HEK293T (cell line): ENCODE measurements at regions of chr12 and their contacts with region 1.

Region 1: DNA sequence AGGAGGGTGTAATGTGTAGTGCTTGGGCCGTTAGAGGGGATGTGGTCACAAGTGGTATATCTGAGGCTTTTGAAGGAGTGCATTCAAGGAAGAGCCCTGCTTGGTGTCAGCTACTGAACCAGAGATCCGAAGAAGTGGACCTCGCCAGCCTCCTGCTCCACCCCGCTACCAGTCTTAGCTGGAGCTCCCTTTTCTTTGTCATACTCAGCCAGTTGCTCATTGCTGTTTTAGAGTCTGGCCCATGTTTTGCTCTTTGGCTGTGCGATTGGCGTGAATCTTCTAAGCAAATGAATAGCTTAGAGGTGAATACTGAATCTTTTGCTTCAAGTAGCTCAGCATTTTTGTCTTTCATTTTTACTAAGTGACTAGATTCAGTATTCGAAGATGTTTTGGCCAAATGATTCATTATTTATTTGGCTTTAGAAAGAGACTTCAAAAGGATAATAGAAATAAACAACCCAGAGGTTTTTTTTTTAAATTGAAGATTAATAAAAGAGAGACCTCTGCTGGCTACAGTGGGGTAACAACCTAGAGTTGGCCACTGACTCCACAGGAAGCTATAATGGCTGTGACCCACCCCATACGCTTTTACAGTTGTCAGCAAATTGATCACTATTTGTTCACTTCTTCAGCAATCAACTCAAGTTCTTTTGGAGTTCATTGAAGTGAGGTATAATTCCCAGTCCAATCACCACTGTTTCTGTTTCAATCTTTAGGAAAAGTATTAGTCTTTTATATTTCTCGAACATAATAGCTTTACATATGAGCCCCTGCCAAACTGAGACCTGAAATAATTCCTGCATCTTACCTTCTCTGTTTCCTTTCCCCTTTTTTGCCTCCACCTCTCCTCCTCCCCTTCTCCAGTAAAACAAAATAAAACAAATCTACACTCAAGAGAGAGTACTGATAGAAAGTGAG is 19.9 kb downstream of the CDKN1B start:
- DNase-seq: no peak

Region 2: DNA sequence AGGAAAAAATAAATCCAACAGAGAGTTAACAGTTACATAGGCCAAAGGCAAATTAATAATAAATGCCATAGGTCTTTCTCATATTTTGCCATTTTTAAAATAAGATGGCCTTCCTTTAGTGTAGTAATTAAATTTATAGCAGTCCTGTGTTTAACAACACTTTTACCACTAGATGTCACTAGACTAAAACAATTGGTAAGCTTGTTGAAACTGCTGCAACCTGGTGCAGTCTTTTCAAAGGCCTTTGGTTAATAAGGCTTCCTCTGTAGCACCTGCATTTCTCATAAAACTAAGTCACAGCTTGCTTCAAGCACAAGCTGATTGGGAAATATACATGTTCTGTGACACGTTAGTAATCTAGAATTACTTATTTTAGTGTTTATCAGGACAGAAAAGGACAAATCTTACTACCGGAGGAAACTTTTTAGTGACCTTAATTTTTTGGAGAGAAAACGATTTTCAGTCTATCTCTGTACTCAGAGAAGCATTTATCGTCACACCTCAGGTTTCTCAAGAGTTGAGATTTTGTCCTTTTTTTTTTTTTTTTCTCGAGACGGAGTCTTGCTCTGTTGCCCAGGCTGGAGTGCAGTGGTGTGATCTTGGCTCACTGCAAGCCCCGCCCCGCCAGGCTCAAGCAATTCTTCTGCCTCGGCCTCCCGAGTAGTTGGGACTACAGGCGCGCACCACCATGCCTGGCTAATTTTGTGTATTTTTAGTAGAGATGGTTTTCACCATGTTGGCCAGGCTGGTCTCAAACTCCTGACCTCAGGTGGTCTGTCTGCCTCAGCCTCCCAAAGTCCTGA is 360.2 kb before region 1 on chr12:
- CTCF ChIA-PET with region 1: interaction called, 13 read pairs
- POLR2A ChIA-PET with region 1: no interaction called
- DNase-seq: peak; percentile 68

Region 3: DNA sequence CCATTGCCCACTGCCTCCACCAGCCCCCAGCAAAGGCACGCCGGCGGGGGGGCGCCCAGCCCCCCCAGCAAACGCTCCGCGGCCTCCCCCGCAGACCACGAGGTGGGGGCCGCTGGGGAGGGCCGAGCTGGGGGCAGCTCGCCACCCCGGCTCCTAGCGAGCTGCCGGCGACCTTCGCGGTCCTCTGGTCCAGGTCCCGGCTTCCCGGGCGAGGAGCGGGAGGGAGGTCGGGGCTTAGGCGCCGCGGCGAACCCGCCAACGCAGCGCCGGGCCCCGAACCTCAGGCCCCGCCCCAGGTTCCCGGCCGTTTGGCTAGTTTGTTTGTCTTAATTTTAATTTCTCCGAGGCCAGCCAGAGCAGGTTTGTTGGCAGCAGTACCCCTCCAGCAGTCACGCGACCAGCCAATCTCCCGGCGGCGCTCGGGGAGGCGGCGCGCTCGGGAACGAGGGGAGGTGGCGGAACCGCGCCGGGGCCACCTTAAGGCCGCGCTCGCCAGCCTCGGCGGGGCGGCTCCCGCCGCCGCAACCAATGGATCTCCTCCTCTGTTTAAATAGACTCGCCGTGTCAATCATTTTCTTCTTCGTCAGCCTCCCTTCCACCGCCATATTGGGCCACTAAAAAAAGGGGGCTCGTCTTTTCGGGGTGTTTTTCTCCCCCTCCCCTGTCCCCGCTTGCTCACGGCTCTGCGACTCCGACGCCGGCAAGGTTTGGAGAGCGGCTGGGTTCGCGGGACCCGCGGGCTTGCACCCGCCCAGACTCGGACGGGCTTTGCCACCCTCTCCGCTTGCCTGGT is 20.0 kb before region 1 on chr12 and contains the start of gene CDKN1B:
- CTCF ChIA-PET with region 1: interaction called, 21 read pairs
- POLR2A ChIA-PET with region 1: interaction called, 81 read pairs
- DNase-seq: peak; percentile 81

Region 4: GRCh38 chr12:12724661-12725545 is 12.1 kb before region 1 on chr12:
- CTCF ChIA-PET with region 1: interaction called, 37 read pairs
- POLR2A ChIA-PET with region 1: interaction called, 81 read pairs
- DNase-seq: no peak

Region 5: DNA sequence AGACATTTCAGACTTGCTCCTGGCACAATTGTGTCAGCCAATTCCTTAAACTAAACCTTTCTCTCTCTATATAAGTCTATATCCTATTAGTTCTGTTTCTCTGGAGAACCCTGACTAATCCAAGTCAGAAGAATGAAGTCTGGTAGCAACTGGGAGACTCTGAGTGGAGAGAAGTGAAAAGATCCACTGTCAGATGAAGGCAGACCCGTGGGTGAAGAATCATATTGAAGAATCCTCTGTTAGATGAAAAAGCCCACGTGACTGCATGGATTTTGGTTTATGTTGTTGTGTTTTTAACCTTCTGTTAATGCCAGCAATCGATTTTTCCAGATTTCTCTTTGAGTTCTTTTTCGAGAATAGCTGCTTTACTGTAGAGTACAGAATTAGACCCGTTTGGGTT is 18.9 kb after region 1 on chr12:
- CTCF ChIA-PET with region 1: interaction called, 17 read pairs
- POLR2A ChIA-PET with region 1: no interaction called
- DNase-seq: no peak